ENCODE measurements at regions of chr9 and their contacts with region 1.

Region 1: DNA sequence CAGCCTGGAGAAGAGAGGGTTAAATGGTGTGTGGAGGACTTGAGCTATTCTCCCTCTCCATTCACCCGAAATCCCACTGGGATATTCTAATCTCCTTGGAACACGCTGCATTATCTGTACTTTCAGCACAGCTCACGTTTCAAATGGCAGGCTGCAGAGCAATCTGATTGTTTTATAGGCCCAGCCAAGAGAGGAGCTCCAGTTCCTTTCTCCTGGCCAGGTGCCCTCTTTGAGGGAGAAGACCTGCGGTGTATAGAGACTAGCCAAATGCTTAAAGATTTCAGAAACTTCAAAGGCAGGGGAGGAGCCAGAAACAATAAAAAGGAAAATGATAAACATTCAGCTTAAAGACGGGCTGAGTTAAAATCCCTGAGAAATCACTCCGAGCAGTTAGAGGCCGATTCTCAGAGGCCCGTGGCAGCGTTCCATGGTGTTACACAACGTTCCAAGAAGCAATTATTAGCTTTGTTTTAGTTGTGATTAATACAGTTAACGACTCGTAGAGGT is 564.0 kb upstream of the KLF4 start:
- DNase-seq: peak; percentile 75
- H3K4me3 ChIP-seq: no peak overlapping the region
- H3K27ac ChIP-seq: peak overlapping the region; percentile 23
- H3K4me1 ChIP-seq: peaks cover 55% of the 10 kb centered on the region
- H3K27me3 ChIP-seq: no peaks in the 10 kb centered on the region
- CTCF ChIP-seq: no peak
- POLR2A ChIP-seq: no peak

Region 2: GRCh38 chr9:107548048-107548800 is 505.4 kb before region 1 on chr9:
- CTCF ChIA-PET with region 1: no interaction called
- POLR2A ChIA-PET with region 1: no interaction called
- dilution Hi-C with region 1: no loop called
- intact Hi-C with region 1: loop called (anchors 2 kb)
- DNase-seq: peak; percentile 80
- H3K4me3 ChIP-seq: peak overlapping the region in 2 of 3 experiments; percentile 10 to 24
- H3K27ac ChIP-seq: peak overlapping the region; percentile 74
- H3K4me1 ChIP-seq: peaks cover 16% of the 10 kb centered on the region
- H3K27me3 ChIP-seq: no peaks in the 10 kb centered on the region
- CTCF ChIP-seq: no peak
- POLR2A ChIP-seq: no peak

Region 3: DNA sequence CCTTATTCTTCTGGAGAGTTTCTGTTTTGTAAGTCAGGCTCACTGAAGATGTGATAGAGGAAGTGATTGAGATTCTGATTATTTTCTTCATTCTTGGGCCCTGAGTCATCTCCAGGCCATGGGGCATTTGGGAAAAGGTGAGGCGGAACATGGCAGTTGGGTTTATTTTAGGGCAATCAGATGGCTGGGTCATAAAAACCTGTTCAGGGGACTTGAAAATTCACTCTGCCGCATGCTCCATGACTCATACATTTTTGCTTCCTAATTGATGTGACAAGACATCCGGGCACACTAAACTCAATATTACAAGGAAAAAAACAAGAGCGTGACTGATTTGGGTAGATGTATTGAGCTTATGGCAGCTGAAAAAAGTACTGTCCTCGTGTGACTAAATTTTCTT is 298.3 kb before region 1 on chr9:
- CTCF ChIA-PET with region 1: no interaction called
- POLR2A ChIA-PET with region 1: no interaction called
- dilution Hi-C with region 1: no loop called
- intact Hi-C with region 1: loop called (anchors 2 kb)
- DNase-seq: peak; percentile 87
- H3K4me3 ChIP-seq: no peak overlapping the region
- H3K27ac ChIP-seq: peak overlapping the region; percentile 68
- H3K4me1 ChIP-seq: peaks cover 45% of the 10 kb centered on the region
- H3K27me3 ChIP-seq: no peaks in the 10 kb centered on the region
- CTCF ChIP-seq: no peak
- POLR2A ChIP-seq: no peak

Region 4: DNA sequence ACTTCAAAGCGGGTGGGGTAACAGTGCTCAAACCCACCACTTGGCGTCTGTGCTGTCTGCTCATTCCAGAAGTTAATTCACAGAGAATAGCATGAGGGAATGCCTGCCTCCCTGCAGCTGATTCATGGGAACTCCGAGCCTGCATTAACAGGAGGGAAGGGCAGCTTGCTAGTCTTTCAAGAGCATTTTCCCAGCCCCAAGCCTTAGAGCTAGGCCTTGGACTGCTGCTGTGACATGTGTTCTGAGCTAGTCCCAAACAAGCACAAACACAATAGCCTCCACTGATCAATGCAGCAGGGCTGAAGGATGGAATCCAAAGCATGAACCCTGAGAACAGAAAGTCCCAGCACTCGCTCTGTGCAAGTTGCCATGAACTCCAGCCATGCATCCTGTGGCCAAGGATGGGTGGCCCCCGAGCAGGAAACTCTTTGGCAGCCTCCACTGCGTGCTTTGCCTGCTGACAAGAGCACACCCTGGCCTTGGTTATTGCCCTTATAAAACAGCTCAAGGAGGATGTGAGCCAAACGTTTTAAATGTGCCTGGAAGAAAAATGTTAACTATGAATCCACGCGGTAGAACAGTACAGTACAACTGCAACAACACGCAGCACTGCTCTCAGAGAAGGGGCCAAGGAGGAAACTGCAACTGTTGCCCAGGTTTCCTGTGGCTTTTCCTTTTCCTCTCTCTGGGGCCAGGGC is 89.0 kb after region 1 on chr9:
- CTCF ChIA-PET with region 1: interaction called, 4 read pairs
- POLR2A ChIA-PET with region 1: no interaction called
- dilution Hi-C with region 1: no loop called
- intact Hi-C with region 1: loop called (anchors 2 kb)
- DNase-seq: peak; percentile 89
- H3K4me3 ChIP-seq: no peak overlapping the region
- H3K27ac ChIP-seq: peak overlapping the region; percentile 19
- H3K4me1 ChIP-seq: peaks cover 20% of the 10 kb centered on the region
- H3K27me3 ChIP-seq: no peaks in the 10 kb centered on the region
- CTCF ChIP-seq: peak; percentile 3 to 26
- POLR2A ChIP-seq: no peak

Region 5: GRCh38 chr9:108272349-108272899 is 218.8 kb after region 1 on chr9:
- CTCF ChIA-PET with region 1: interaction called, 5 read pairs
- POLR2A ChIA-PET with region 1: no interaction called
- dilution Hi-C with region 1: no loop called
- intact Hi-C with region 1: loop called (anchors 10 kb)
- DNase-seq: peak; percentile 29
- H3K4me3 ChIP-seq: no peak overlapping the region
- H3K27ac ChIP-seq: no peak overlapping the region
- H3K4me1 ChIP-seq: no peaks in the 10 kb centered on the region
- H3K27me3 ChIP-seq: no peaks in the 10 kb centered on the region
- CTCF ChIP-seq: peak; percentile 47 to 59
- POLR2A ChIP-seq: no peak

Measured in endothelial cell of umbilical vein (primary cell).